ENCODE measurements at regions of chr20 and their contacts with region 1.

Region 1: GRCh38 chr20:47334022-47334551 is 22.4 kb downstream of the ZMYND8 start:
- DNase-seq: peak; percentile 96
- H3K4me3 Mint-ChIP-seq: peak overlapping the region; percentile 72
- H3K27ac Mint-ChIP-seq: peak overlapping the region; percentile 96
- H3K4me1 Mint-ChIP-seq: peaks cover 67% of the 10 kb centered on the region
- H3K27me3 Mint-ChIP-seq: no peaks in the 10 kb centered on the region
- CTCF ChIP-seq: no peak

Region 2: DNA sequence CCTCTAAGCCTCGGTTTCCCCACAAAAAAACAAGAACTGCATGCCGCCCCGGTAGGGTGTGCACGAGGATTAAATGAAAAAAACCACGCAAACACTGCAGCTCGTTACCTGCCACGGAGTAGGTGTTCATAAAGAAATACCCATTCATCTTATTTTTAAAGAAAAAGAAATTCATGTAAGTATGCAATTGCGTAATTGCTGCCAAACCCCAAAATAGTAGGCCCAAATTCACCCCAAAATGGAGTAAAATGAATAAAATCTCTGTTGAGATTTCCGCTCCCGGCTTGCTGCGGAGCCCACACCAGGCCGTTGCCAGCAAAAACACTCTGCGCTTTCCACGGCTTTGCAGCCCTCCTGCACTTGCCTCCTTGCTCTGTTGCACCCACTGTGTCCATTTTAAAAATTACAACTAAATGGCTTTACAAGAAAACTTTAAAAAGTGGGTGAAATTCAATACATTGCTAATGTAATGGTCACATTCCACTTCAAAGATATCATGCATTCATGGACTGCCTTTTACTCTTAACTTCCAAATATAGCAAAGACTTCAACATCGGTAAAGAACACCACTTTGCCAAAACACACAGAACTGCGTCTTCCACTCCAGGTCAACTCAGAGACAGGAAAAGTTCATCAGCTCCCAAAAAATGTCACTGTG is 102.6 kb before region 1 on chr20:
- CTCF ChIA-PET with region 1: no interaction called
- POLR2A ChIA-PET with region 1: no interaction called
- intact Hi-C with region 1: no loop called
- DNase-seq: no peak
- H3K4me3 Mint-ChIP-seq: no peak overlapping the region
- H3K27ac Mint-ChIP-seq: no peak overlapping the region
- H3K4me1 Mint-ChIP-seq: no peaks in the 10 kb centered on the region
- H3K27me3 Mint-ChIP-seq: no peaks in the 10 kb centered on the region
- CTCF ChIP-seq: no peak

Region 3: GRCh38 chr20:47370850-47371676 is 37.0 kb after region 1 on chr20:
- CTCF ChIA-PET with region 1: interaction called, 3 read pairs
- POLR2A ChIA-PET with region 1: interaction called, 19 read pairs
- intact Hi-C with region 1: no loop called
- DNase-seq: peak; percentile 62
- H3K4me3 Mint-ChIP-seq: no peak overlapping the region
- H3K27ac Mint-ChIP-seq: no peak overlapping the region
- H3K4me1 Mint-ChIP-seq: peaks cover 9% of the 10 kb centered on the region
- H3K27me3 Mint-ChIP-seq: no peaks in the 10 kb centered on the region
- CTCF ChIP-seq: no peak